Activated T-helper 2 cell treated with anti-CD3 and anti-CD28 coated beads, Interferon-gamma antibody, Interleukin-2, Interleukin-4, amounts not matched to agents 10 μg/mL and 5 μg/mL and 100 μg/mL, durations not matched to agents 14 hours and 24 hours and 36 hours (primary cell): ENCODE measurements at regions of chr6 and their contacts with region 1.

Region 1: GRCh38 chr6:87701676-87702588 is at the start of gene AKIRIN2:
- DNase-seq: peak; percentile 96
- H3K4me3 Mint-ChIP-seq: peak within 1 kb of the TSS; percentile 98
- H3K27ac Mint-ChIP-seq: peak within 1 kb of the TSS; percentile 94
- H3K4me1 Mint-ChIP-seq: peaks cover 34% of the 10 kb centered on the region
- H3K27me3 Mint-ChIP-seq: no peaks in the 10 kb centered on the region
- total RNA-seq, gene AKIRIN2: 41.9 and 42.0 TPM in 2 replicates

Region 2: DNA sequence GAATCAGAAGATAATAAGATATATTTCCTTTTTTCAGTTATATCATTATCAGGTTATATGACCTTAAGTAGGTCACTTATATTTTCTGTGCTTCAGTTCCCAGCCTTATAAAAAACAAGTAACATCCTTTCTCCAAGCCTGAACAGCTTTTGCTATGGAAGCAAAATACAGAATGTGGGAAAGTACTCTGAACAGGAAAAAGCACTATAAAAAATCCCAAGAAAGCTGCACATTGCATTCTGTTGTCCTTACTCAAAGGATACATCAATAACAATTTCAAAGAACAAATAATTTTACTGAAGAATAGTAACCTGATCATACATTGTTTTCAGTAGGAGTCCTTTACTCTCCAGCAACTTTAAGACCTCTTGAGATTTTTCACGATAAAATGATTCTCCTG is 172.7 kb before region 1 on chr6:
- intact Hi-C with region 1: no loop called
- DNase-seq: no peak
- H3K4me3 Mint-ChIP-seq: no peak overlapping the region
- H3K27ac Mint-ChIP-seq: no peak overlapping the region
- H3K4me1 Mint-ChIP-seq: peaks cover 4% of the 10 kb centered on the region
- H3K27me3 Mint-ChIP-seq: no peaks in the 10 kb centered on the region

Region 3: GRCh38 chr6:87589693-87590549 is 112.0 kb before region 1 on chr6 and contains the starts of genes ORC3 and RARS2:
- intact Hi-C with region 1: loop called (anchors 1 kb)
- DNase-seq: peak; percentile 94
- H3K4me3 Mint-ChIP-seq: peak within 1 kb of the TSS; percentile 95
- H3K27ac Mint-ChIP-seq: peak within 1 kb of the TSS; percentile 89
- H3K4me1 Mint-ChIP-seq: peaks cover 39% of the 10 kb centered on the region
- H3K27me3 Mint-ChIP-seq: no peaks in the 10 kb centered on the region
- total RNA-seq, gene ORC3: 31.2 and 31.9 TPM in 2 replicates
- total RNA-seq, gene RARS2: 23.3 and 23.5 TPM in 2 replicates

Region 4: GRCh38 chr6:87682310-87682709 is 19.6 kb before region 1 on chr6:
- intact Hi-C with region 1: loop called (anchors 1 kb)
- DNase-seq: no peak
- H3K4me3 Mint-ChIP-seq: no peak overlapping the region
- H3K27ac Mint-ChIP-seq: no peak overlapping the region
- H3K4me1 Mint-ChIP-seq: peaks cover 36% of the 10 kb centered on the region
- H3K27me3 Mint-ChIP-seq: no peaks in the 10 kb centered on the region

Region 5: DNA sequence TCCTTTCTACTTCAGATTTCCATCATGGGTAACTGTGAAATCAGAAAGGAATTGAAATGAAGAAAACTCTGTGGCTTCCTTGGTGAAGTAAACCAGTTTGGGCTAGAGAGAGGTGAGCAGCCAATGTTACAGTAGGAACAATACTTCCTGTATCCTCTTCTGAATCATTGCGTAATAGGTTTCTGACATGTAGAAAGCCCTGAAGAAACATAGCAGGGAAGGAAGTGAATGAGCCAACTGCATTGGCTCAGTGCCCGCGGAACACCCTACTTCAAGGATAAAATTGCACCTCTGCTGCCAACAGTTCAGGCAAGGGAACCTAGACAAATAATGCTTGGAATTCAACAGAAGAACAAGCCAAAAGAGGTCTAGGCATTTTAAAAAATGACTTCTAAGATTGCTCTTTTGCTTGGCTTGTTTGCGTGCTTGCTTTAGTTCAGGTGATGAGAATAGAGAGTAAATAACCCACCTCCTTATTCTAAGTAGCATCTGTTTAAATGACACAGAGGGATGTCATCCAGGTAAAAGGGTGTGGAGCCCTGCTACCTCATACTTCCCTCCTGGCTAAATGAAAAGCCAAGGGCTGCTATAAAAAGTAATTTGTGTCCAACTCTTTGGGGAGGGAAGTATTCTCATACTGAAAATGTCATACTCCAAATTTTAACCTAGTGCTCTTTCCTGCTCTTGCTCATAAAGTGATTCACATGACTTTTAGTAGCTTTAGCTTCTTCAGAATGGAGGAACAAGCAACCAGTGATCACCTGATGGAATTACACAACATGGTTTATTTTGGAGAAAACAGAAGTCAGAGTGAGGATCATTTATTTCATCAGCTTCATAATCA is 30.1 kb after region 1 on chr6:
- intact Hi-C with region 1: loop called (anchors 2 kb)
- DNase-seq: no peak
- H3K4me3 Mint-ChIP-seq: no peak overlapping the region
- H3K27ac Mint-ChIP-seq: no peak overlapping the region
- H3K4me1 Mint-ChIP-seq: peaks cover 19% of the 10 kb centered on the region
- H3K27me3 Mint-ChIP-seq: peaks cover 29% of the 10 kb centered on the region

Region 6: DNA sequence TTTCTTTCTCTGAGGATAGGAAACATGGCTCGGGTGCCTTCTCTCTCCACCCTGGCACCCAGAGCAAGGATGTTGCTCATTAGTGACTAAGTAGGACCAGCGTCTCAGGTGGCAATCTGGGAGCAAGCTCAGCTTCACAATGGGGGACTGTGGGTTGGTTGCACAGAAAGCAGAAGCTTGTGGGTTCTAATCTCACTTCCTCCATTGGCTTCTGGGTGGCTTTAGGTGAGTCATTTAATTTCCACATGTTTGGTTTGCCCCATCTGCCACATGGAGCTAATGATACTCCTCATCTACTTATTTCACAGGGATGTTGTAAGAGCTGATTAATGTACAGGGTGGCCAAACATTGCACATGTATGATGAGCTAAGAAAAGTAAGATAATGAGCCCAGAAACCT is 54.9 kb after region 1 on chr6:
- intact Hi-C with region 1: loop called (anchors 5 kb)
- DNase-seq: peak; percentile 22
- H3K4me3 Mint-ChIP-seq: no peak overlapping the region
- H3K27ac Mint-ChIP-seq: no peak overlapping the region
- H3K4me1 Mint-ChIP-seq: peaks cover 16% of the 10 kb centered on the region
- H3K27me3 Mint-ChIP-seq: peaks cover 30% of the 10 kb centered on the region

Region 7: GRCh38 chr6:87907521-87907920 is 205.6 kb after region 1 on chr6:
- intact Hi-C with region 1: loop called (anchors 5 kb)
- DNase-seq: peak; percentile 22
- H3K4me3 Mint-ChIP-seq: no peak overlapping the region
- H3K27ac Mint-ChIP-seq: peak overlapping the region; percentile 64
- H3K4me1 Mint-ChIP-seq: peaks cover 61% of the 10 kb centered on the region
- H3K27me3 Mint-ChIP-seq: peaks cover 20% of the 10 kb centered on the region